Heart left ventricle (tissue), 16 donors: ENCODE measurements at regions of chr19 and their contacts with region 1.

Region 1: GRCh38 chr19:16041299-16041990 is 34.9 kb upstream of the TPM4 start:
- DNase-seq: peak; percentile 77 to 91 (median 80)
- ATAC-seq: peak; percentile 70 to 96 (median 90)
- H3K4me3 ChIP-seq: peak overlapping the region in 7 of 12 donors; percentile 0 to 34 (median 25)
- H3K27ac ChIP-seq: no peak overlapping the region
- H3K4me1 ChIP-seq: peaks cover 0 to 15% (median 6%) of the 10 kb centered on the region in 12 donors
- H3K27me3 ChIP-seq: peaks cover 0 to 4% (median 0%) of the 10 kb centered on the region in 9 donors
- CTCF ChIP-seq: peak; percentile 93 to 99 (median 97)
- POLR2A ChIP-seq: no peak

Region 2: DNA sequence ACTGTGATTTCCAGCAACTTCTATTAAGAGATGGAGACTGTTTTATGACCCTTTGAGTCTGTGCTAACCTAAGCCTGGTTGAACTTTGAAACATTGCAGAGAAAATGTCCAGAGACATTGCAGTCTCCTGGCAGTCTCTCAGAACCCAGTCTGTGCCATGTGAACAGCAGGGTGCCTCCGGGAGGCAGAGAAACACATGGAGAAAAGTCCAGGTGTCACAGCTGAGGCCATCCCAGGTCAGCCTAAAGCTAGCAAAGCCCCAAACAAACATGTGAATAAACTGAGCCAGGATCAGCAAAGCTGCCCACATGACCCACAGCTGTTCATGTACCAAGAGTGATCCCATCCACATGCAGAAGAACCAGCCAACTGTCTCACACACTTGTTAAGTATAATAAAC is 115.0 kb before region 1 on chr19:
- intact Hi-C with region 1: no loop called
- DNase-seq: no peak
- ATAC-seq: no peak
- H3K4me3 ChIP-seq: no peak overlapping the region
- H3K27ac ChIP-seq: no peak overlapping the region
- H3K4me1 ChIP-seq: no peaks in the 10 kb centered on the region
- H3K27me3 ChIP-seq: peaks cover 0 to 75% (median 26%) of the 10 kb centered on the region in 9 donors
- CTCF ChIP-seq: no peak
- POLR2A ChIP-seq: no peak

Region 3: GRCh38 chr19:16076154-16076957 is 34.9 kb after region 1 on chr19 and contains the start of gene TPM4:
- intact Hi-C with region 1: no loop called
- DNase-seq: peak; percentile 92 to 97 (median 95)
- ATAC-seq: peak; percentile 85 to 91 (median 87)
- H3K4me3 ChIP-seq: peak within 1 kb of the TSS; percentile 79 to 99 (median 96)
- H3K27ac ChIP-seq: peak within 1 kb of the TSS; percentile 97 to 100 (median 100)
- H3K4me1 ChIP-seq: peaks cover 0 to 57% (median 33%) of the 10 kb centered on the region in 12 donors
- H3K27me3 ChIP-seq: peaks cover 0 to 6% (median 0%) of the 10 kb centered on the region in 9 donors
- CTCF ChIP-seq: no peak
- POLR2A ChIP-seq: peak; percentile 76 to 81
- total RNA-seq, gene TPM4: 49.2 to 260 (median 92.1) TPM

Region 4: GRCh38 chr19:16095071-16095571 is 53.7 kb after region 1 on chr19:
- intact Hi-C with region 1: loop called in 1 of 10 experiments (anchors 5 kb)
- DNase-seq: peak in 2 of 5 donors; percentile 57 to 69
- ATAC-seq: peak in 3 of 4 donors; percentile 34 to 56 (median 48)
- H3K4me3 ChIP-seq: no peak overlapping the region
- H3K27ac ChIP-seq: peak overlapping the region in 6 of 12 donors; percentile 22 to 65 (median 38)
- H3K4me1 ChIP-seq: peaks cover 0 to 7% (median 0%) of the 10 kb centered on the region in 12 donors
- H3K27me3 ChIP-seq: no peaks in the 10 kb centered on the region
- CTCF ChIP-seq: no peak
- POLR2A ChIP-seq: no peak

Region 5: GRCh38 chr19:16111160-16111908 is 69.9 kb after region 1 on chr19 and contains the start of gene RAB8A:
- intact Hi-C with region 1: loop called in 7 of 10 experiments (anchors 1 to 5 kb)
- DNase-seq: peak; percentile 99 to 100 (median 99)
- ATAC-seq: peak; percentile 98 to 99 (median 98)
- H3K4me3 ChIP-seq: peak within 1 kb of the TSS; percentile 73 to 99 (median 83)
- H3K27ac ChIP-seq: peak within 1 kb of the TSS in 11 of 12 donors; percentile 81 to 97 (median 89)
- H3K4me1 ChIP-seq: peaks cover 4 to 49% (median 29%) of the 10 kb centered on the region in 12 donors
- H3K27me3 ChIP-seq: no peaks in the 10 kb centered on the region
- CTCF ChIP-seq: peak; percentile 93 to 99 (median 98)
- POLR2A ChIP-seq: no peak
- total RNA-seq, gene RAB8A: 10.9 to 53.7 (median 23.7) TPM

Region 6: DNA sequence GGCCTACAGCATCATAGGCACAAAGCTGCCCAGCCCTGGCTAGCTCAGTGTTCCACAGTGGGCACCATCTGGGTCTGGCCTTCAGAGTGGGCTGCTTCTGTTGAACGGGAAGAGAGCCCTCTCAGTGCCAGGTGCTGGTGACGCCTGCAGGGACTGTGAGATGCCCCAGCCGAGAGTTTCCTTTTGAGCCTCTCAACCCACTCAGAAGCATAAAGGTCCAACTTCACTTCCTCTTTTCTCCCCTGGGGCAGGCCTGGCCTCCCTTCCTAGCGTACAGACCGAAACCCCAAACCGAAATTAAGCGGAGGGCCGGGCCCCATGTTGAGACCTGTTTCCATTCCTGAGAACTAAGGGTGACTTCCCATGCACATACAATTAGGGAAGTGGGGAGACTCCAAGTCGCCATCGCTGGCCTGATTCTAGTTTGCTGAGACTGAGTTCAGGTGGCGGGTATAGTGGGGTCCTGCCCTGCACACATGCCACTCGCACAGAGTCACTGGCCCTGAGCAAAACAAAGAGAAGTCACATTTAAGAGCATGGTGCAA is 77.1 kb after region 1 on chr19:
- intact Hi-C with region 1: loop called in 4 of 10 experiments (anchors 5 kb)
- DNase-seq: peak in 2 of 5 donors; percentile 35 to 48
- ATAC-seq: peak in 3 of 4 donors; percentile 33 to 63 (median 56)
- H3K4me3 ChIP-seq: peak overlapping the region in 1 of 12 donors; percentile 7
- H3K27ac ChIP-seq: peak overlapping the region in 1 of 12 donors; percentile 87
- H3K4me1 ChIP-seq: peaks cover 0 to 67% (median 10%) of the 10 kb centered on the region in 12 donors
- H3K27me3 ChIP-seq: no peaks in the 10 kb centered on the region
- CTCF ChIP-seq: no peak
- POLR2A ChIP-seq: no peak

Region 7: DNA sequence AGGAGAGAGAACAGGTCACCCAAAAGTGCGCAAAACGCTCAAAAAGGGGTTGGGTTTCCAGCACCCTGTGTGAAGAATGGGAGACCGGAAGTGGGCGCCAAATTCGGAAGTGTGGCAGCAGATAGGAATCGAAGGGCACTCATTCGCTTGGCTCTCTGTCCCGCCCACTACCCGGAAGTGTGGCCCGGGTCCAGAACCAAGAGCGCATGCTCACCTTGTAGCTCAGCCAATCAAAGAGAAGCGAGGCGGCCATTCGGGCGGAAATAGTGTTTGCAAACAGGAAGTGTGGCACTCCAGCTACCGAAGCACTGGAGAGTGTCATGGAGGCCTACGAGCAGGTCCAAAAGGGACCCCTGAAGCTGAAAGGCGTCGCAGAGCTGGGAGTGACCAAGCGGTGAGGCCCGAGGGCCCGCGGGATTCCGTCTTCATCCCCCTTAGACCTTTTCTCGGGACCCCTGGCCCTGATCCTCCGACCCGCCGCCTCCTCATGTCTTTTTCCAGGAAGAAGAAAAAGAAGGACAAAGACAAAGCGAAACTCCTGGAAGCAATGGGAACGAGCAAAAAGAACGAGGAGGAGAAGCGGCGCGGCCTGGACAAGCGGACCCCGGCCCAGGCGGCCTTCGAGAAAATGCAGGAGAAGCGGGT is 143.8 kb after region 1 on chr19 and contains the start of gene FAM32A:
- intact Hi-C with region 1: loop called (anchors 1 to 2 kb)
- DNase-seq: peak; percentile 99
- ATAC-seq: peak; percentile 94 to 99 (median 98)
- H3K4me3 ChIP-seq: peak within 1 kb of the TSS; percentile 66 to 99 (median 91)
- H3K27ac ChIP-seq: peak within 1 kb of the TSS; percentile 72 to 92 (median 82)
- H3K4me1 ChIP-seq: peaks cover 3 to 41% (median 16%) of the 10 kb centered on the region in 12 donors
- H3K27me3 ChIP-seq: peaks cover 0 to 9% (median 0%) of the 10 kb centered on the region in 9 donors
- CTCF ChIP-seq: peak in 10 of 12 donors; percentile 7 to 51 (median 25)
- POLR2A ChIP-seq: peak in 1 of 2 donors; percentile 74
- total RNA-seq, gene FAM32A: 32.0 to 71.8 (median 37.5) TPM

Region 8: DNA sequence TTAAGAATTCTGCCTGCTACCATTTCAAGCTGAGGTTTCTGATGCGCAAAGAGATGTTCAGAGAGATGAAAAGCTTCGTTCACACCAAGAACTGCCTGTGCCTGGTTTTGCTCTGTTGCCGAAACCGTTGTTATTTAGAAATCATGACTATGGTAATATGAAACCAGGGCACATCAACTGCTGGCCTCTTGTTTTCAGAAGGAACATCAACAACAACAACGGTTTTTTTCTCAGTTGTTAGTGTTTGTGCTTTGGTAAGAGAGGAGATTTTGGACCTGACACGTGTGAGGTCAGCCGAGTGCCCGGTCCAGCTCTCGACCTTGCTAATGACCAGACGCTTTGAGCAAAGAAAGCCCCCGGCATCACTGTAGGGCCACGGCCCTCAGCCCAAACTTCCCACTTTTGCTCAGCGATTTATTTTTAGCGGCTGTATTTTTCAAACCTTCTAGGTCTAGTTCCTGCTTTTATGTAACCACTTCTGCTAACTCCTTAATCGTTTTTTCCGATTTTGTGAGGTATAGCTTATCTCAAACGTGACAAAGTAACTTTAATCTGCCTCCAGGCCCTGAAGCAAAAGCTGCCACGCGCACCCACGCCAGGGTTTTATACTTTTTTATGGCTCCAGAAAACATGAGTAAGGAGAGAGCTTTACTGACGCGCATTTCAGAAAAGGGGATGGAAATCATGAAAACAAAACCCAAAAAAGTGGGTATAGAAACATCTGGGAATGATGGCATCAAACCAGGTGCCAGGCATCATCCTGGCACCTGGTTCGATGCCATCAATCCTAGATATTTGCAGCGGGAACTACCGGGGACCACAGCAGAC is 325.2 kb after region 1 on chr19:
- intact Hi-C with region 1: no loop called
- DNase-seq: peak in 1 of 5 donors; percentile 24
- ATAC-seq: no peak
- H3K4me3 ChIP-seq: peak overlapping the region in 1 of 12 donors; percentile 28
- H3K27ac ChIP-seq: peak overlapping the region in 4 of 12 donors; percentile 15 to 87 (median 24)
- H3K4me1 ChIP-seq: peaks cover 0 to 90% (median 11%) of the 10 kb centered on the region in 12 donors
- H3K27me3 ChIP-seq: no peaks in the 10 kb centered on the region
- CTCF ChIP-seq: no peak
- POLR2A ChIP-seq: no peak